ENCODE measurements at regions of chr12 and their contacts with region 1.

Region 1: GRCh38 chr12:110252706-110253105 is 28.3 kb upstream of the ATP2A2 start:
- DNase-seq: no peak
- ATAC-seq: no peak
- H3K4me3 ChIP-seq: no peak overlapping the region
- H3K27ac ChIP-seq: no peak overlapping the region
- H3K4me1 ChIP-seq: peaks cover 23% of the 10 kb centered on the region; the same call in 1 of the 2 replicates
- H3K27me3 ChIP-seq: no peaks in the 10 kb centered on the region
- CTCF ChIP-seq: no peak
- POLR2A ChIP-seq: no peak
- RAD21 ChIP-seq: no peak

Region 2: GRCh38 chr12:110217996-110218674 is 34.6 kb before region 1 on chr12:
- CTCF ChIA-PET with region 1: no interaction called
- POLR2A ChIA-PET with region 1: no interaction called
- dilution Hi-C with region 1: no loop called
- in situ Hi-C with region 1: no loop called
- intact Hi-C with region 1: no loop called
- DNase-seq: no peak
- ATAC-seq: no peak
- H3K4me3 ChIP-seq: no peak overlapping the region
- H3K27ac ChIP-seq: peak overlapping the region; percentile 26; the same call in 1 of the 2 replicates
- H3K4me1 ChIP-seq: peaks cover 3% of the 10 kb centered on the region; the same call in 1 of the 2 replicates
- H3K27me3 ChIP-seq: no peaks in the 10 kb centered on the region
- CTCF ChIP-seq: no peak
- POLR2A ChIP-seq: no peak
- RAD21 ChIP-seq: no peak

Region 3: DNA sequence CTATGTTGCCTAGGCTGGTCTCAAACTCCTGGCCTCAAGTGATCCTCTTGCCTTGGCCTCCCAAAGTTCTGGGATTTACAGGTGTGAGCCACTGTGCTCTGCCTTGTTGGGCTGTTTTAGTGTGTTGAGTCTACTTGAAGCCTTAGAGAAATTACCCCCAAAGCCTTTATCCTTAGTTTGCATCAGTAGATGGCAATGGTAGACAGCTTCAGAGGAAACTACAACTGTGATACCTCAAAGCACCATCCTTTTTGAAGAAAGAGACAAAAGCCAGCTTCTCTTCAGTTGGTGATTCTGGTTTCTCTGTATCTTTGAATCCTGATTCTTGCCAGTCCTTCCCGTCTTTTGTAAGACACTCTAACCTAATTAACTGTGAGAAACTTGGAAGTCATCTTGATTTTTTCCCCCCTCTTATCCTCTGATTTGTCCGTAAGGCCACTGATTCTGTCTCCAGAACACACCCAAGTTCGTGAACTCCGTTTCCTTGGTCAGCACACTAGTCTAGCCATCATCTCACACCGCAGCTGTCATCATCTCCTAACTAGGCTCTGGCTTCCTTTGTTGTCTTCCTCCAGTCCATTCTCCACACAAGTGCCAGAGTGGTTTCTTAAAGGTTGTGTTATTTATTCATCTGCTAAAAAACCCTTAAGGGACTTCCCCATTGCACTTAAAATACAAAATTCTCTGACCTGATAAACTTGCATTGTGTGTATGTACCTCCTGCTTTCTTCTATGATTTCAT is 48.5 kb after region 1 on chr12:
- CTCF ChIA-PET with region 1: no interaction called
- POLR2A ChIA-PET with region 1: no interaction called
- dilution Hi-C with region 1: no loop called
- in situ Hi-C with region 1: no loop called
- intact Hi-C with region 1: no loop called
- DNase-seq: no peak
- ATAC-seq: no peak
- H3K4me3 ChIP-seq: no peak overlapping the region
- H3K27ac ChIP-seq: peak overlapping the region; percentile 34; the same call in 1 of the 2 replicates
- H3K4me1 ChIP-seq: peaks cover 15% of the 10 kb centered on the region
- H3K27me3 ChIP-seq: no peaks in the 10 kb centered on the region
- CTCF ChIP-seq: no peak
- POLR2A ChIP-seq: no peak
- RAD21 ChIP-seq: no peak

Region 4: GRCh38 chr12:110475426-110475825 is 222.7 kb after region 1 on chr12:
- CTCF ChIA-PET with region 1: no interaction called
- POLR2A ChIA-PET with region 1: no interaction called
- dilution Hi-C with region 1: no loop called
- in situ Hi-C with region 1: no loop called
- intact Hi-C with region 1: no loop called
- DNase-seq: peak; percentile 27
- ATAC-seq: peak; percentile 78
- H3K4me3 ChIP-seq: no peak overlapping the region
- H3K27ac ChIP-seq: no peak overlapping the region
- H3K4me1 ChIP-seq: no peaks in the 10 kb centered on the region
- H3K27me3 ChIP-seq: no peaks in the 10 kb centered on the region
- CTCF ChIP-seq: no peak
- POLR2A ChIP-seq: no peak
- RAD21 ChIP-seq: no peak

Region 5: DNA sequence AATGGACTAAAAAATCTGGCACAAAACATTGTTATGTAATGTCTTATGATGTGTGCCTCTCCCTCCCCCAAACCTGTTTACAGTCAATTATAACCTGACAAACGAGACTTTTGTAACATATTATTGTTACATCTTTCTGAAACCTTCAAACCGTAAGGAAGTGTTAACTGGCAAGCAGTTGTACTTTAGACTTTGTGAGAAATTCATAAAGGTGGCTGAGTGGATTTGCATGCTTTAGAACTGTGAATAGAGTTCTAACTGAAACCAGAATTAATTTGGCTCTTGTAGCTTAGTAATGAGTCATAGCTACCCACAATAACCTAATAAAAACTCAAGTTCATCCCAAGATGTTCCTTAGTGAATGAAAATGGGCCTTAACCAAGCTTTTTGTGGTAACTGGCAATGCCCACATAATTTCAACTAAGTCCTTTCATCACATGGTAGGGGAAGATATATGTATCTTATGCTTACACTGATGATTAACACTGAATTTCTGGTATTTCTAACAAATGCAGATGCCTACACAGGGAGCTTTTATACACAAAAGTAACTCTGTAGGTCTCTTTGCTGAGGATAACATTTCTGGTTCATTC is 279.1 kb after region 1 on chr12:
- CTCF ChIA-PET with region 1: no interaction called
- POLR2A ChIA-PET with region 1: no interaction called
- dilution Hi-C with region 1: no loop called
- in situ Hi-C with region 1: no loop called
- intact Hi-C with region 1: no loop called
- DNase-seq: peak; percentile 53
- ATAC-seq: peak; percentile 66
- H3K4me3 ChIP-seq: no peak overlapping the region
- H3K27ac ChIP-seq: no peak overlapping the region
- H3K4me1 ChIP-seq: peaks cover 10% of the 10 kb centered on the region
- H3K27me3 ChIP-seq: no peaks in the 10 kb centered on the region
- CTCF ChIP-seq: no peak
- POLR2A ChIP-seq: no peak
- RAD21 ChIP-seq: no peak

Region 6: DNA sequence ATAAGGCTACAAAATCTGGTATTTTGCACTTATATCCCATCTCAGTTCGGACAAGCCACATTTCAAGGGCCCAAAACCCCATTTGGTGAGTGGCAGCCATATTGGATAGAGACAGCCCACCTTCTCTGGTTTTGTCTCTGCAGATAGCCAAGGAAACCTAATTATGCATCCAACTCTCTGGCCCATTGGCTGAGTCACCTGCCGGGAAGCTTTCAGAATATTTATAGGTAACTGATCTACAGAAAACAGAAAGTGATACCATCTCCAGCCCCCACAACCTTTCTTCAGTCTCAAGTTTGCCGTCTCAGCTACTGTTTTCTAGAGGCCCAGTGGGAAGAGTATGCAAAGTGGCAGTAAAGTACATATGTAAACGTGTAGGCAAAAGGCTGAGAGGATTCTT is 523.7 kb after region 1 on chr12:
- CTCF ChIA-PET with region 1: no interaction called
- POLR2A ChIA-PET with region 1: interaction called, 18 read pairs
- dilution Hi-C with region 1: no loop called
- in situ Hi-C with region 1: no loop called
- intact Hi-C with region 1: no loop called
- DNase-seq: no peak
- ATAC-seq: no peak
- H3K4me3 ChIP-seq: no peak overlapping the region
- H3K27ac ChIP-seq: no peak overlapping the region
- H3K4me1 ChIP-seq: no peaks in the 10 kb centered on the region
- H3K27me3 ChIP-seq: peaks cover 5% of the 10 kb centered on the region
- CTCF ChIP-seq: no peak
- POLR2A ChIP-seq: no peak
- RAD21 ChIP-seq: no peak

Measured in IMR-90 (cell line).